ENCODE measurements at regions of chr10 and their contacts with region 1.

Region 1: GRCh38 chr10:132023092-132023811 is 41.5 kb upstream of the BNIP3 start:
- DNase-seq: peak; percentile 72 to 85
- H3K4me3 ChIP-seq: no peak overlapping the region
- H3K4me3 Mint-ChIP-seq: peak overlapping the region; percentile 29
- H3K27ac Mint-ChIP-seq: no peak overlapping the region
- H3K4me1 ChIP-seq: peaks cover 6% of the 10 kb centered on the region; the same call in 1 of the 2 replicates
- H3K4me1 Mint-ChIP-seq: peaks cover 22% of the 10 kb centered on the region
- H3K27me3 ChIP-seq: no peaks in the 10 kb centered on the region
- H3K27me3 Mint-ChIP-seq: peaks cover 19% of the 10 kb centered on the region
- CTCF ChIP-seq: peak; percentile 79 to 92

Region 2: GRCh38 chr10:131663351-131663750 is 359.9 kb before region 1 on chr10:
- CTCF ChIA-PET with region 1: no interaction called
- POLR2A ChIA-PET with region 1: no interaction called
- intact Hi-C with region 1: no loop called
- DNase-seq: peak in 1 of 2 experiments; percentile 6
- H3K4me3 ChIP-seq: no peak overlapping the region
- H3K4me3 Mint-ChIP-seq: no peak overlapping the region
- H3K27ac Mint-ChIP-seq: no peak overlapping the region
- H3K4me1 ChIP-seq: no peaks in the 10 kb centered on the region
- H3K4me1 Mint-ChIP-seq: no peaks in the 10 kb centered on the region
- H3K27me3 ChIP-seq: no peaks in the 10 kb centered on the region
- H3K27me3 Mint-ChIP-seq: no peaks in the 10 kb centered on the region
- CTCF ChIP-seq: no peak

Region 3: DNA sequence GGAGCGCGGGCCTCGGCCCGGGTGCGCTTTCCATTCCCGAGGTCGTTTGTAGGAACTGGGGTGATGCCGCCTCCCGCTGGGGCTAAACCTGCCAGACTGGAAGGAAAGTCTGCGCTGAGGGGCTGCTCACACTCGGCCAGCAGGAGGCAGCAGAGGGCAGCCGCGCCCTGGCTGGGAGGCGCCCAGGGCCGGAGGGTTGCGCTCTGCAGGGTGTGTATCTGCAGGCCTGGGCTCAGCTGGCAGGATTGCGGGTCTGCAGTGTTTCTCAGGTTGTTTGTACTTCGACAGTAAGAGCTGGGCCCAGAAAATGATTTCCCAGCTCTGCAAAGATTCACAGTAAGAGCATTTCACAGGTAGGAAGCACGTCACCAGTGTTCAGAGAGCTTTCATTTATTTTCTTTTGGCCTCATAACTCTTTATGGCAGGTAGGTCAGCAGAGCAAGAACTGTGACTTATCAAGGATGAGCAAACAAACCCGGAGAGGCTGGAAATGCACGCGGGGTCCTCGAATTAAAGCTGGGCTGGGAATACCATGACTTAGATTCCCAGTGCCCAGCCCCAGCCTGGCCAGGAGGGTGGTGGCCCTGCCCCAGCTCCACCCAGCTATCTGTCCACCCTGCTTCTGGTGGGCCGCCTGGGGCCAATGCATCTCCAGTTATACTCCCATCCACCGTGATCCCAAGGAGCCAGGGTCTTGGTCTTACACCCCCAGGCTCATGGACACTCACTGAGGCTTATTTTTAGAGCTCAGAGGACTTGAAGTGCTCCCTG is 137.7 kb before region 1 on chr10:
- CTCF ChIA-PET with region 1: interaction called, 12 read pairs
- POLR2A ChIA-PET with region 1: no interaction called
- intact Hi-C with region 1: loop called (anchors 2 kb)
- DNase-seq: peak in 1 of 2 experiments; percentile 68
- H3K4me3 ChIP-seq: no peak overlapping the region
- H3K4me3 Mint-ChIP-seq: no peak overlapping the region
- H3K27ac Mint-ChIP-seq: no peak overlapping the region
- H3K4me1 ChIP-seq: no peaks in the 10 kb centered on the region
- H3K4me1 Mint-ChIP-seq: no peaks in the 10 kb centered on the region
- H3K27me3 ChIP-seq: no peaks in the 10 kb centered on the region
- H3K27me3 Mint-ChIP-seq: no peaks in the 10 kb centered on the region
- CTCF ChIP-seq: peak; percentile 75 to 78

Region 4: DNA sequence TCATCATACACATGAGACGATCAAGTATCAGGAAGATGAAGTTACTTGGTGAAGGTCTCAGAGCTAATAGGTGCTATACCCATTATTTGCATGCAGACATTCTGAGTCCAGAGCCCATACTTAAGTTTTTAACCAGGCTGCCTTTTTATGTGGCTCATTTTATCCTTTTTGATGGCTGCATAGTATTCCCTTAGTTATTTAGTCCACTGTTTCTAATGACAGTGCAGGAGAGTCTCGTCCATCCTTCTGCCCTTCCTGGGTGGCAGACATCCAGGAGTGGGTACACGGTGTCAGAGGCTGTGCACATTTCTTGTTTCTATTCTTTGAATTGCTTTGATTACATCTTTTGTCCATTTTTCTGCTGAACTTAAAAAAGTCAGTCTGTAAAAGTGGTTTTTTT is 110.6 kb before region 1 on chr10:
- CTCF ChIA-PET with region 1: no interaction called
- POLR2A ChIA-PET with region 1: no interaction called
- intact Hi-C with region 1: no loop called
- DNase-seq: no peak
- H3K4me3 ChIP-seq: no peak overlapping the region
- H3K4me3 Mint-ChIP-seq: no peak overlapping the region
- H3K27ac Mint-ChIP-seq: no peak overlapping the region
- H3K4me1 ChIP-seq: no peaks in the 10 kb centered on the region
- H3K4me1 Mint-ChIP-seq: peaks cover 19% of the 10 kb centered on the region
- H3K27me3 ChIP-seq: no peaks in the 10 kb centered on the region
- H3K27me3 Mint-ChIP-seq: no peaks in the 10 kb centered on the region
- CTCF ChIP-seq: no peak

Region 5: DNA sequence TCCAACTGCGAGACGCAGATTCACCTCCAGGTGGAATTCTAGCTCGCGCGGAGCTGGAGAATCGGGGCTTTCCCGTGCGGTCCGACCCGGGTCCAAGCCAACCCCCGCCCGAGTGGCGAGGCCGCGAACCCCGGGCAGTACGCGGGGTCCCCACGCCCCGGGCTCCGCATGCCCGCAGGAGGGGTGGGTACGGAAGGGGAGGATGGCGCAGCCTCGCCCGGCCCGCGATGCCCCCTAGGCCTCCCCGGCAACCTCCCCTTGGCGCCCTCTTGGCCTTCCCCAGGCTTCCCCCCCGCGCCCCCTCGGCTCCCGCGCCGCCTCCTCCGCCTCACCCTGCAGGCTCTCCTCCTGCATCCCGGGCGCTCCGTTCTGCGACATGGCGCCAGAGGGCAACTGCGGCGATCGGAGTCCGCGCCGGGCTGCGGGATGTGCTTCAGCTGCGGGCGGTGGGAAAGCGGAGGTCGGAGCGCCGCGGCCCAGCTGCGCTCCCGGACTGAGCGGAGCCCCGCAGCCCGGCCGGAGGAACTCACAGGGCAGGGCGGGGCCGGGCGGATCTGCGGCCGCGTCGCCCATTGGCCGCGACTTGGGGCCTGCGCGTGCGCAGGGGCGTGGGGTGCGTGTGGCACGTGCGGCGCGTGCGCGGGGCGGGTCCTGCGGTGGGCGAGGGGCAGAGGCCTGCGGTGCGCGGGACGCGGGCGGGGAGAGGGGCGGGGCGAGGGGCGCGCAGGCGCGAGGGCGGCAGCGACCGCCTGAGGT is 41.6 kb before region 1 on chr10 and contains the start of gene BNIP3:
- CTCF ChIA-PET with region 1: interaction called, 16 read pairs
- POLR2A ChIA-PET with region 1: no interaction called
- intact Hi-C with region 1: loop called (anchors 1 kb)
- DNase-seq: peak; percentile 90 to 94
- H3K4me3 ChIP-seq: peak within 1 kb of the TSS; percentile 78
- H3K4me3 Mint-ChIP-seq: peak within 1 kb of the TSS; percentile 75
- H3K27ac Mint-ChIP-seq: no peak within 1 kb of the TSS
- H3K4me1 ChIP-seq: no peaks in the 10 kb centered on the region
- H3K4me1 Mint-ChIP-seq: no peaks in the 10 kb centered on the region
- H3K27me3 ChIP-seq: no peaks in the 10 kb centered on the region
- H3K27me3 Mint-ChIP-seq: no peaks in the 10 kb centered on the region
- CTCF ChIP-seq: no peak
- total RNA-seq, gene BNIP3: 16.5 and 18.4 TPM in 2 replicates

Region 6: GRCh38 chr10:131997366-131998049 is 25.7 kb before region 1 on chr10:
- CTCF ChIA-PET with region 1: interaction called, 21 read pairs
- POLR2A ChIA-PET with region 1: interaction called, 5 read pairs
- intact Hi-C with region 1: loop called (anchors 1 kb)
- DNase-seq: peak; percentile 88
- H3K4me3 ChIP-seq: no peak overlapping the region
- H3K4me3 Mint-ChIP-seq: peak overlapping the region; percentile 54
- H3K27ac Mint-ChIP-seq: peak overlapping the region; percentile 90
- H3K4me1 ChIP-seq: peaks cover 19% of the 10 kb centered on the region
- H3K4me1 Mint-ChIP-seq: peaks cover 22% of the 10 kb centered on the region
- H3K27me3 ChIP-seq: no peaks in the 10 kb centered on the region
- H3K27me3 Mint-ChIP-seq: no peaks in the 10 kb centered on the region
- CTCF ChIP-seq: no peak